AG04449 (cell line): ENCODE measurements at regions of chr10 and their contacts with region 1.

Region 1: GRCh38 chr10:119872860-119873681 is 428 bp upstream of the MCMBP start:
- DNase-seq: no peak
- H3K4me3 ChIP-seq: peak overlapping the region; percentile 76
- CTCF ChIP-seq: no peak

Region 2: DNA sequence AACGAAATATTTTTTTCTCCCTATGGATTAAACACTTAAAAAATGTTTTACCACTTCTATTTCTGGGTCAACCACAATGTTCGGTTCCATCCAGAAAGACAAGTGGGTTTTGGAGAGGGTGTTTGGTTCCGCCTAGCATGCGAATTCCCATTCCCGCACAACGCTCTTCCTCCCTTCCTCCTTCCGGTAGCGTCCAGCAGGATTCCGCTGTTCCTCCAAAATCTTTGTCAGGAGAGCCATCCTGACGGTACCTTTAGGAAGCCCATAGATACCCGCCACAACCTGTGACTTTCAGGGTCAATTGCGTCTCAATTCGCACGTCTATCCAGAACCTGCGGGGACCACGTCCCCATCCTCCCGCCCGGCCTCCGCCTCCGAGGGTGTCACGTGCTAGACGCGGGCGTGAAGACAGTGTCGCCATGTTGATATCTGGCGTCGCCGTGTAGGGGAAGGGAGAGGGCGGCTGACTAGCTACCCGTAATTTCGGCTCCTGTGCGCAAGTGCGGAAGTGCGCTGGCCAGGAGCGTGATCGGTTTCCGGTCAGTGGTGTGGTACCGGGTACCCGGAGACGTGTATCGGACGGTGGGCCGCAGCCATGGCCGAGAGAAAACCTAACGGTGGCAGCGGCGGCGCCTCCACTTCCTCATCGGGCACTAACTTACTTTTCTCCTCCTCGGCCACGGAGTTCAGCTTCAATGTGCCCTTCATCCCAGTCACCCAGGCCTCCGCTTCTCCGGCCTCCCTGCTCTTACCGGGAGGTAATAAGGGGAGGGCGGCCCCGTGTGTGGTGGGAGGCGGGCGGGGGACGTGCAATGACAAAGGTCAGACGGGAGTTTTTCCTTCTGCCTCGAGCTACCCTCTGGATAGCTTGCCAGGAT is 19.4 kb after region 1 on chr10 and contains the start of gene SEC23IP:
- CTCF ChIA-PET with region 1: no interaction called
- POLR2A ChIA-PET with region 1: interaction called, 18 read pairs
- DNase-seq: peak; percentile 74
- H3K4me3 ChIP-seq: peak within 1 kb of the TSS; percentile 97
- CTCF ChIP-seq: no peak

Region 3: GRCh38 chr10:119933179-119933578 is 60.1 kb after region 1 on chr10:
- CTCF ChIA-PET with region 1: no interaction called
- POLR2A ChIA-PET with region 1: no interaction called
- DNase-seq: no peak
- H3K4me3 ChIP-seq: no peak overlapping the region
- CTCF ChIP-seq: peak; percentile 7

Region 4: GRCh38 chr10:120221873-120222485 is 348.9 kb after region 1 on chr10:
- CTCF ChIA-PET with region 1: no interaction called
- POLR2A ChIA-PET with region 1: no interaction called
- DNase-seq: no peak
- H3K4me3 ChIP-seq: no peak overlapping the region
- CTCF ChIP-seq: peak; percentile 61